ENCODE measurements at regions of chr16 and their contacts with region 1.

Region 1: DNA sequence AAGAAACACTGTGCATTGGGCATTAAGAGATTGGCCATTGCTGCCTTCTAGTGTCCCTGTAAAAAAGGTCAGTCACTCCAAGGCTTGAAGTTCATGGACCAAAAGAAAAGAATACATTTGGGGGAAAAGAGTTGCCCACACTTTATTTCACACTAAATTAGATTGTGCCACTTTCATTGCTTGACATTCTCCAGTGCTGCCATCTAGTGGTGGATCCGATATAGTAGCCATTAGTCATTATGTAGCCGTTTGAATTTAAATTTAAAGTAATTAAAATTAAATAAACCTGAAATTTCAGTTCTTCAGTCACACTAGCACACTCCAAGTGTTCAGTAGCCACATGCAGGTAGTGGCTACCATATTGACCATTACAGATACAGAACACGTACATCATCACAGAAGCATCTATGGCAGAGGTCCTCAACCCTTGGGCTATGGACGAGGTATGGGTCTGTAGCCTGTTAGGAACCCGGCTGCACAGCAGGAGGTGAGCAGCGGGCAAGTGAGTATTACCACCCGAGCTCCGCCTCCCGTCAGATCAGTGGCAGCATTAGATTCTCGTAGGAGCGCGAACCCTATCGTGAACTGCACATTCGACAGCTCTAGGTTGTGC is 21.9 kb upstream of the CDH5 start:
- DNase-seq: peak in 3 of 10 donors; percentile 33 to 58 (median 41)
- H3K4me3 ChIP-seq: no peak overlapping the region
- H3K27ac ChIP-seq: no peak overlapping the region
- H3K27me3 ChIP-seq: peaks cover 0 to 7% (median 0%) of the 10 kb centered on the region in 45 donors
- CTCF ChIP-seq: peak; percentile 73 to 94 (median 86)

Region 2: GRCh38 chr16:66275775-66276428 is 68.7 kb before region 1 on chr16:
- intact Hi-C with region 1: loop called in 1 of 2 experiments (anchors 2 kb)
- DNase-seq: peak in 2 of 10 donors; percentile 8 to 16
- H3K4me3 ChIP-seq: no peak overlapping the region
- H3K27ac ChIP-seq: no peak overlapping the region
- H3K27me3 ChIP-seq: no peaks in the 10 kb centered on the region
- CTCF ChIP-seq: peak in 53 of 56 donors; percentile 24 to 72 (median 50)

Region 3: DNA sequence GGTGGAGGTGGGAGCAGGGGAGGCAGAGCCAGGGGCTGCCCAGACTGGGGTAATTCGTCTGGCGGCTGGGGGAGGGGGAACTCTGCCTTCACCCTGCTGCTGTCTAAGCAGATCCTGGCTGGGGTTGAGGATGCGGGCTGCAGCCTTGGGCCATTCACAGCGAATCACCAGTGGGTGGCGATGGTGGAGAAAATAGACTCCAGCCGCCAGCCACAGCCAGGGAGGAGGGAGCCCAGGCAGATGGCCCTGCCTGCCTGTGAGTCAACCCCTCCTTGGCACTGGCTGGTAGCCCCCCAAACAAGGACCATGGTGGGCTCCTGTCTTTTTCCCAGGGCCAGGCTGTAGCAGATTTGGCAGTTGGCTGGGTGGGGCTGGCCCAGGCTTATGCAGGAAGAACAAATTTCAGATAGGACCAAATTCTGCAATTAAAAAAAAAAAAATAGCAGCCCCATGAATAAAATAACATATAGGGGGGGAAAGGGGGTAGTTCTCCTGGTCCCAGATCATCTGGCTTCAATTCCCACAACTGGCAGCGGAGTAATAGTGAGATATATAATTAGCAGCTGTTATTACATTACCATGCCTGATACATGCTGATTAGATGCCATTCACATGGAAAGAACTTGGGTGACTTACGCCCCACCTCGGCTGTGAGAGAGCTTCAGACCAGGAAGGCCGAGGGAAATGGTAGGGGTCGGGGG is 19.7 kb before region 1 on chr16:
- intact Hi-C with region 1: loop called in 1 of 2 experiments (anchors 2 kb)
- DNase-seq: peak; percentile 20 to 83 (median 70)
- H3K4me3 ChIP-seq: no peak overlapping the region
- H3K27ac ChIP-seq: peak overlapping the region in 6 of 59 donors; percentile 23 to 84 (median 58)
- H3K27me3 ChIP-seq: no peaks in the 10 kb centered on the region
- CTCF ChIP-seq: peak in 55 of 56 donors; percentile 28 to 73 (median 57)